IMR-90 (cell line): ENCODE measurements at regions of chr17 and their contacts with region 1.

Region 1: GRCh38 chr17:27660426-27660825 is 29.4 kb downstream of the LGALS9 start:
- DNase-seq: no peak
- ATAC-seq: no peak
- H3K4me3 ChIP-seq: no peak overlapping the region
- H3K27ac ChIP-seq: no peak overlapping the region
- H3K4me1 ChIP-seq: no peaks in the 10 kb centered on the region
- H3K27me3 ChIP-seq: peaks cover 8% of the 10 kb centered on the region; the same call in 1 of the 2 replicates
- CTCF ChIP-seq: no peak
- POLR2A ChIP-seq: no peak
- RAD21 ChIP-seq: no peak

Region 2: DNA sequence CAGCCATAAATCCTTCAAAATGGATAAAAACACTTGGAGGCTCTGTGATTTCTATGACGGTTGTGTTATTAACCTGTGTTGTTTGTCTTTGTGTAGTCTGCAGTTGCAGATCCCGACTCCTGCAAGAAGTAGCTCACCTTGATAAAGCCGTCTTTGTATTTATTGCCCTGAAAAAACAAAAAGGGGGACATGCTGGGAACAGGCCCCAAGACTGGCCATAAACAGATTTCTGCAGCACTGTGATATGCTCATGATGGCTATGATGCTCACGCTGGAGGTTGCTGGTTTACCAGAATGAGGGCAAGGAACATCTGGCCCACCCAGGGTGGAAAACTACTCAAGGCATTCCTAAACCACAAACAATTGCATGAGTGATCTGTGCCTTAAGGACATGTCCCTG is 41.5 kb after region 1 on chr17:
- CTCF ChIA-PET with region 1: no interaction called
- POLR2A ChIA-PET with region 1: no interaction called
- dilution Hi-C with region 1: no loop called
- in situ Hi-C with region 1: loop called (anchors 5 kb)
- intact Hi-C with region 1: no loop called
- DNase-seq: no peak
- ATAC-seq: no peak
- H3K4me3 ChIP-seq: no peak overlapping the region
- H3K27ac ChIP-seq: no peak overlapping the region
- H3K4me1 ChIP-seq: no peaks in the 10 kb centered on the region
- H3K27me3 ChIP-seq: no peaks in the 10 kb centered on the region
- CTCF ChIP-seq: no peak
- POLR2A ChIP-seq: no peak
- RAD21 ChIP-seq: no peak

Region 3: DNA sequence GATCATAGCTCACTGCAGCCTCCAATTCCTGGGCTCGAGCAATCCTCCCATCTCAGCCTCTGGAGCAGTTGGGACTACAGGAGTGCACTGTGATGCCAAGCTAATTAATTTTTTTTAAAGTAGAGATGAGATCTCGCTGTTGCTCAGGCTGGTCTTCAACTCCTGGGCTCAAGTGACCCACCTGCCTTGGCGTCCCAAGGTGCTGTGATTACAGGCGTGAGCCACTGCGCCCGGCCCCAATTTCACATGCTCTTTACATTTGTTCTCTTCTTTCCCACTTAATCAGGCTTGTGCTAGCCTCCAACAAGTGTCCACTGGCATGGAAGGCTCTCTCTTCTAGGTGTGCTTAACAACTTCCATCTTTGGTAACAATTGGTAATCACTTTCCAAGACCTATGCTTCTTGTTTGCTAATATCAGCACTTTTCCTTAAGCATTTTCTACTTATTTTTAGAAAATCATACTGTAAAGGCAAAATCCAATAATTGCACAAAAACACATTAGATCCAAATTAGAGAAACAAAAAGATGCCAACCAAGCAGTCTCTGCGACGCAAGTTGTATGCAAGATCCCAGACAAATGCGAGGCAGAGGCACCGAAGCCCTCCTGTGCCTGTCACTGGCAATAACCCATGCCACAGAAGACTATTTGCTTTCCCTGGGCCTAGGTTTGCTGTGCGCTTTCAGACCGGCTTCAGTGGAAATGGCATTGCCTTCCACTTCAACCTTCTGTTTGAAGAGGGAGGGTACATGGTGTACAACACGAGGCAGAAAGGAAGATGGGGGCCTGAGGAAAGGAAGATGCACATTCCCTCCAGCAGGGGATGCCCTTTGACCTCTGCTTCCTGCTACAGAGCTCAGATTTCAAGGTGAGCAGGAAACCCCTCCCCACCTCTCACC is 87.3 kb after region 1 on chr17:
- CTCF ChIA-PET with region 1: no interaction called
- POLR2A ChIA-PET with region 1: no interaction called
- dilution Hi-C with region 1: no loop called
- in situ Hi-C with region 1: loop called (anchors 5 kb)
- intact Hi-C with region 1: no loop called
- DNase-seq: no peak
- ATAC-seq: no peak
- H3K4me3 ChIP-seq: no peak overlapping the region
- H3K27ac ChIP-seq: no peak overlapping the region
- H3K4me1 ChIP-seq: no peaks in the 10 kb centered on the region
- H3K27me3 ChIP-seq: no peaks in the 10 kb centered on the region
- CTCF ChIP-seq: 0 out of 2 replicates have a peak, but pooled peaks have one; percentile 15
- POLR2A ChIP-seq: no peak
- RAD21 ChIP-seq: no peak